ENCODE measurements at regions of chr5 and their contacts with region 1.

Region 1: DNA sequence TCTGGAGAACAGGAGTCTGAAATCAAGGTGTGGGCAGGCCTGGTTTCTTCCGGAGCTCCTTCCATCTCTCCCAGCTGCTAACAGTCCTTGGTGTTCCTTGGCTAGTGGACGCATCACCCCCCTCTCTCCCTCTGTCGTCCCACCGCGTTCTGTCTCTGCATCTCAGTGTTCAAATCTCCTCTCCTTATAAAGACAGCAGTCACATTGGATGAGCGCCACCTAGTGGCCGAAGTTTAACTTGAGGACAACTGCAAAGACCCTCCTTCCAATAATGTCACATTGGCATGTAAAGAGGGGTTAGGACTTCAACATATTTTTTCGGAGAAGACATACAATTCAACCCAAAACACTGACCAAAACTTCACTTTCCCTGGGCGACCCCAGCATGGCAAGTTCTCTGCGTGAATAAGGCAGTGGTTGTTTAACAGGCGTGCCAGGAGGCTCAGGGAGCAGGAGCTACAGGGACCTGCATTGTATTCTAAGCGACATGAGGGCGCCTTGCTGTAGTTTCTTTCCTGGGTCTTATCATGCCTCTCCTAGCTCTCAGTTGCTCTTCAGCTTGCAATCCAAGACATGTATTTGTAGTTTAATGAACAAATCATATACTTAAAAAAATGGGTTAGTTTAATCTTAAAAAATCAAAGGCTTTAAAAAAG is 27.9 kb upstream of the BASP1 start:
- DNase-seq: peak; percentile 58
- H3K4me3 ChIP-seq: peak overlapping the region in 1 of 2 experiments; percentile 12; a peak in 1 of 4 replicates
- H3K27ac ChIP-seq: peak overlapping the region in 1 of 2 experiments; percentile 74; a peak in 2 of 4 replicates
- H3K4me1 ChIP-seq: peaks cover 0 to 40% of the 10 kb centered on the region in 2 experiments; a peak in 2 of 4 replicates
- H3K27me3 ChIP-seq: no peaks in the 10 kb centered on the region
- CTCF ChIP-seq: peak; percentile 96
- EP300 ChIP-seq: no peak
- RAD21 ChIP-seq: peak; percentile 76

Region 2: DNA sequence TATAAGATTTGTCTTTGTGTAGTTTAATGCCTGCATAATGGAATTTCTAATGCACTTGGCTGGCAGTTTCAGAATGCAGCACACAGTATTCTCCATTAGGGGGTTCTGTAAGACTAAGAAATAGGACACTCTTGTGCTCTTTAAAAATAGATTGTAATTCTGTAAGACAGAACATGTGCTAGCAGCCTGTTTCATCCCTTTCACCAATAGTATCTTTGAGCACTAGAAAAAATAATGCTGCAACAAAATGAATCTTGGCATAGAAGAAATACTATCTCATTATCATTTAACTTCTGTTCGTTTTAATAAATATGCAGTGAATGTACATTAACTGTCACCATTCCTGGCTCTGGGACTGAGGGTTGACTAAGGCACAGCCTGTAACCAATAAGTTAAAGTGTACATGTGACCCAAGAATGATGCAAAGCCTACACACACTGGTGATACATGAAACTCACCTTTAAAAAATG is 700.2 kb before region 1 on chr5:
- CTCF ChIA-PET with region 1: interaction called, 18 read pairs
- POLR2A ChIA-PET with region 1: no interaction called
- DNase-seq: peak; percentile 54
- H3K4me3 ChIP-seq: no peak overlapping the region
- H3K27ac ChIP-seq: no peak overlapping the region
- H3K4me1 ChIP-seq: no peaks in the 10 kb centered on the region
- H3K27me3 ChIP-seq: no peaks in the 10 kb centered on the region
- CTCF ChIP-seq: peak; percentile 87
- EP300 ChIP-seq: no peak
- RAD21 ChIP-seq: peak; percentile 93

Region 3: GRCh38 chr5:16791036-16791705 is 398.3 kb before region 1 on chr5:
- CTCF ChIA-PET with region 1: interaction called, 159 read pairs
- POLR2A ChIA-PET with region 1: no interaction called
- DNase-seq: peak; percentile 69
- H3K4me3 ChIP-seq: no peak overlapping the region; a peak in 1 of 4 replicates
- H3K27ac ChIP-seq: peak overlapping the region in 1 of 2 experiments; percentile 69; a peak in 2 of 4 replicates
- H3K4me1 ChIP-seq: peaks cover 8 to 21% of the 10 kb centered on the region in 2 experiments; a peak in 3 of 4 replicates
- H3K27me3 ChIP-seq: no peaks in the 10 kb centered on the region
- CTCF ChIP-seq: peak; percentile 81
- EP300 ChIP-seq: no peak
- RAD21 ChIP-seq: peak; percentile 93

Region 4: DNA sequence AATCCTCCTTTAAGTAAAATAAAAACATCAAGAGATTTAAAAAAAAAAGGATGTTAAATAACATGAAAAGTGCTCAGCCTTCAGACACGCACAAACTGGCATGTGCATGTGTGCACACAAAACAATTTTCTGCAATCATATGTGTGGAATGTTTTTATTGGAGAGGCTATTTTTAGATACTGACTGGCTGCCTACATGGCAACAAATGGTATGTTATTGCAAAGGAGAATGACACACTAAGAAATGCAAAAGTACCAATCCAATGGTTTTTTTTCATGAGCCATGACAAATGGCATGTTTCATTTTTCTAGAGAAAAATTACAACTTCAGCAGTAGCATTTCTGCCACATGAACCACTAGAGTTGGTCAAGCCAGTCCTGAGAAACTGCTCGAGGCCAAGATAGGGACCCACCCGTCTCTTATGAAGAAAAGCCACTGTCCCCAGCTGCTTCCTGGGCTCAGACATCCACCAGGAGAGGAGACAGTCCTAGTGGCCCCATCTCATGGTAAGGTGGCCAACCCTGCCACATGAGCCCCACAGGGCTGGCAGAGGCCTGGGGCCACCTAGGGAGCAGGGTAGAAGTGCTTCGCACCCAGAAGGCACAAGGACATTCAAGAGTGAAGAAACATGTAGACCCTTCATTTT is 369.9 kb before region 1 on chr5:
- CTCF ChIA-PET with region 1: interaction called, 15 read pairs
- POLR2A ChIA-PET with region 1: interaction called, 3 read pairs
- DNase-seq: no peak
- H3K4me3 ChIP-seq: no peak overlapping the region
- H3K27ac ChIP-seq: peak overlapping the region in 1 of 2 experiments; percentile 90; a peak in 2 of 4 replicates
- H3K4me1 ChIP-seq: peaks cover 0 to 13% of the 10 kb centered on the region in 2 experiments; a peak in 2 of 4 replicates
- H3K27me3 ChIP-seq: no peaks in the 10 kb centered on the region
- CTCF ChIP-seq: no peak
- EP300 ChIP-seq: no peak
- RAD21 ChIP-seq: no peak

Region 5: DNA sequence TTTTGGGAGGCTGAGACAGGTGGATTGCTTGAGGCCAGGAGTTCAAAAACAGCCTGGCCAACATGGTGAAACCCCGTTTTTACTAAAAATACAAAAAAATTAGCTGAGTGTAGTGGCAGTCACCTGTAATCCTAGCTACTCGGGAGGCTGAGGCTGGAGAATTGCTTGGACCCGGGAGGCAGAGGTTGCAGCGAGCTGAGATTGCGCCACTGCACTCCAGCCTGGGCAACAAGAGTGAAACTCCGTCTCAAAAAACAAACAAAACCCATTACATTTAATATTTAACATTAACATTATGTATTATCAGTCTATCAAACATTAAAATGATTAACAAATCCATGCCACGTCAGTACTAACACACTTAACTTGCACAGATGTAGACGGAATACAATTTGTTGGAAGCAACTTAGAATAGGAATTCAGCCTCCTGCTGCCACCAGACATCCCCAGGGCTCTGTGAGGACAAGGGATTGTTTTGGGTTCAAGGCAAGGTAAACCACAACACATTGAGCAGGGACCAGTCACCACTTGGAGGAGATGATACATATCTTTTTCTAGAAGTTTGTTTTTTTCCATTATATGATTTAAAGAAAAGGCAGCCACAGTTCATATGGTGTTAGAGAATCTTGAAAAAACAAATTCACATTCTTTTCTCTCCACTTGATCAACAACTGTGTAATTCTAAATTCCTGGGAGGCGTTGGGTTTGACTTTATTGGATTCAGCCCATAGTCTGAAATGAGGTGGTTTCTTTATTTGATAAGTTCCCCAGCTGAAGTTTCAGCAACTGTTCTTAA is 76.1 kb before region 1 on chr5:
- CTCF ChIA-PET with region 1: interaction called, 10 read pairs
- POLR2A ChIA-PET with region 1: no interaction called
- DNase-seq: no peak
- H3K4me3 ChIP-seq: no peak overlapping the region
- H3K27ac ChIP-seq: peak overlapping the region in 1 of 2 experiments; percentile 71; a peak in 2 of 4 replicates
- H3K4me1 ChIP-seq: peaks cover 0 to 33% of the 10 kb centered on the region in 2 experiments; a peak in 2 of 4 replicates
- H3K27me3 ChIP-seq: no peaks in the 10 kb centered on the region
- CTCF ChIP-seq: no peak
- EP300 ChIP-seq: no peak
- RAD21 ChIP-seq: no peak

Region 6: GRCh38 chr5:17163221-17163620 is 26.3 kb before region 1 on chr5:
- CTCF ChIA-PET with region 1: interaction called, 12 read pairs
- POLR2A ChIA-PET with region 1: no interaction called
- DNase-seq: no peak
- H3K4me3 ChIP-seq: no peak overlapping the region
- H3K27ac ChIP-seq: no peak overlapping the region
- H3K4me1 ChIP-seq: peaks cover 0 to 8% of the 10 kb centered on the region in 2 experiments; a peak in 1 of 4 replicates
- H3K27me3 ChIP-seq: no peaks in the 10 kb centered on the region
- CTCF ChIP-seq: no peak
- EP300 ChIP-seq: no peak
- RAD21 ChIP-seq: no peak